ENCODE measurements at regions of chr14 and their contacts with region 1.

Region 1: GRCh38 chr14:65255536-65256461 is 153.5 kb upstream of the MAX start:
- DNase-seq: peak; percentile 95
- ATAC-seq: peak; percentile 62
- H3K4me3 ChIP-seq: peak overlapping the region; percentile 34
- H3K27ac ChIP-seq: peak overlapping the region; percentile 96
- H3K4me1 ChIP-seq: peaks cover 58% of the 10 kb centered on the region
- H3K27me3 ChIP-seq: no peaks in the 10 kb centered on the region
- CTCF ChIP-seq: no peak

Region 2: DNA sequence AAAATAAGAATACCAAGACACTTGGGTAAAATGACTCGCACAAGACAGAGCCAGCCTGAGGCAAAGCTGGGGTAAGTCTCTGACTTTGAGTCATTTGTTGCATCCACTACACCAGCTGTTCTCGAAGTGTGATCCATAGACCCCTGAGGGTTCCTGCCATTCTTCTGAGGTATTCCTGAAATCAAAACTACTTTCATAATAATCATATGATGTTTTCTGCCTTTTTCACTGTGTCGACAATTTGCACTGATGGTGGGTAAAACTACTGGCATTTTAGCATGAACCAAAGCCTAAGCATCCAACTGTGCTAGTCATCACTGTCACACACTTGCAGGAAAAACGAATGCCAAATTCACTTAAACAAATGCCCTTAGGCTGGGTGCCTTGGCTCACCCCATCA is 21.2 kb after region 1 on chr14:
- CTCF ChIA-PET with region 1: no interaction called
- POLR2A ChIA-PET with region 1: interaction called, 3 read pairs
- intact Hi-C with region 1: loop called (anchors 1 kb)
- DNase-seq: peak; percentile 78
- ATAC-seq: peak; percentile 88
- H3K4me3 ChIP-seq: no peak overlapping the region
- H3K27ac ChIP-seq: peak overlapping the region; percentile 31
- H3K4me1 ChIP-seq: peaks cover 28% of the 10 kb centered on the region
- H3K27me3 ChIP-seq: no peaks in the 10 kb centered on the region
- CTCF ChIP-seq: no peak

Region 3: GRCh38 chr14:65281991-65282895 is 26.4 kb after region 1 on chr14:
- CTCF ChIA-PET with region 1: no interaction called
- POLR2A ChIA-PET with region 1: interaction called, 3 read pairs
- intact Hi-C with region 1: loop called (anchors 1 kb)
- DNase-seq: no peak
- ATAC-seq: peak; percentile 57
- H3K4me3 ChIP-seq: no peak overlapping the region
- H3K27ac ChIP-seq: no peak overlapping the region
- H3K4me1 ChIP-seq: peaks cover 30% of the 10 kb centered on the region
- H3K27me3 ChIP-seq: no peaks in the 10 kb centered on the region
- CTCF ChIP-seq: no peak